ENCODE measurements at regions of chr7 and their contacts with region 1.

Region 1: GRCh38 chr7:8217200-8218068 is 44.5 kb downstream of the ICA1 start:
- DNase-seq: peak; percentile 78
- H3K4me3 ChIP-seq: no peak overlapping the region
- H3K27ac ChIP-seq: no peak overlapping the region
- H3K4me1 ChIP-seq: no peaks in the 10 kb centered on the region
- H3K27me3 ChIP-seq: no peaks in the 10 kb centered on the region
- CTCF ChIP-seq: peak; percentile 70

Region 2: DNA sequence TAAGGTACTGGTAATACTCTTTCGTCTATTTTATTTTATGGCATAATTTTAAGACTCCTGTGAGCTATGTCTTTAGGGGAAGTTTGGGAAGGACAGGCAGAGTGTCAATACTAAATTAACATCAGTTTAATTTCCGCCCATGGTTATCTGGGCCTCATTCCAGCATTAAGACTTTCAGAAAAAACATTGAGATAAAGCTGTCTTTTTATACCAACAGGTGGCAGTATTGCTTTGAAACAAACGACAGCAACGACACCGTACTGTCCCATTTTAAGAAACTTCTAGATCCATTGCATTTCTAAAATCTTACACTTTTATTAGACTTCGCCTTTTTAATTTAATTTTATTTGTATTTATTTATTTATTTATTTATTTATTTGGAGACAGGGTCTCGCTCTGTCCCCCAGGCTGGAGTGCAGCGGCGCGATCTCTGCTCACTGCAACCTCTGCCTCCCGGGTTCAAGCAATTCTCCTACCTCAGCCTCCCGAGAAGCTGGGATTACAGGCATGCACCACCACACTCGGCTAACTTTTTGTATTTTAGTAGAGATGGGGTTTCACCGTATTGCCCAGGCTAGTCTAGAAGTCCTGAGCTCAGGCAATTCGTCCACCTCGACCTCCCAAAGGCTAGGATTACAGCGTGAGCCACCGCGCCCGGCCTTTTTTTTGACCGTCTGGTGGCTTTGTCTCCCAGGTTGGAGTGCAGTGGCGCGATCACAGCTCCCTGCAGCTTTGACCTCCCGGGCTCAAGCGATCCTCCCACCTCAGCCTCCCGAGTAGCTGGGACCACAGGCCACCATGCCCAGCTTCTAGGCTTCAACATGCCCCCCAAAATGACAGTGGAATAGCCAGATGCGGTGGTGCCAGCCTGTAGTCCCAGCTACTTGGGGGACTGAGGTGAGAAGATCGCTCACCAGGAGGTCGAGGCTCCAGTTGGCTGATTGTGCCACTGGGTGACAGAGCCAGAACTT is 1113.8 kb before region 1 on chr7:
- CTCF ChIA-PET with region 1: no interaction called
- POLR2A ChIA-PET with region 1: no interaction called
- intact Hi-C with region 1: loop called (anchors 10 kb)
- DNase-seq: peak; percentile 74
- H3K4me3 ChIP-seq: no peak overlapping the region
- H3K27ac ChIP-seq: no peak overlapping the region
- H3K4me1 ChIP-seq: peaks cover 18% of the 10 kb centered on the region
- H3K27me3 ChIP-seq: no peaks in the 10 kb centered on the region
- CTCF ChIP-seq: peak; percentile 67

Region 3: GRCh38 chr7:7424151-7424873 is 793.1 kb before region 1 on chr7:
- CTCF ChIA-PET with region 1: no interaction called
- POLR2A ChIA-PET with region 1: no interaction called
- intact Hi-C with region 1: loop called (anchors 5 kb)
- DNase-seq: peak; percentile 76
- H3K4me3 ChIP-seq: peak overlapping the region; percentile 33
- H3K27ac ChIP-seq: no peak overlapping the region
- H3K4me1 ChIP-seq: no peaks in the 10 kb centered on the region
- H3K27me3 ChIP-seq: peaks cover 3% of the 10 kb centered on the region
- CTCF ChIP-seq: peak; percentile 86

Region 4: GRCh38 chr7:7595451-7595850 is 622.0 kb before region 1 on chr7:
- CTCF ChIA-PET with region 1: no interaction called
- POLR2A ChIA-PET with region 1: no interaction called
- intact Hi-C with region 1: loop called (anchors 1 kb)
- DNase-seq: peak; percentile 49
- H3K4me3 ChIP-seq: no peak overlapping the region
- H3K27ac ChIP-seq: no peak overlapping the region
- H3K4me1 ChIP-seq: no peaks in the 10 kb centered on the region
- H3K27me3 ChIP-seq: no peaks in the 10 kb centered on the region
- CTCF ChIP-seq: peak; percentile 56

Region 5: GRCh38 chr7:7662527-7662926 is 554.9 kb before region 1 on chr7:
- CTCF ChIA-PET with region 1: no interaction called
- POLR2A ChIA-PET with region 1: no interaction called
- intact Hi-C with region 1: loop called (anchors 5 kb)
- DNase-seq: peak; percentile 37
- H3K4me3 ChIP-seq: no peak overlapping the region
- H3K27ac ChIP-seq: no peak overlapping the region
- H3K4me1 ChIP-seq: peaks cover 7% of the 10 kb centered on the region
- H3K27me3 ChIP-seq: no peaks in the 10 kb centered on the region
- CTCF ChIP-seq: peak; percentile 56

Region 6: DNA sequence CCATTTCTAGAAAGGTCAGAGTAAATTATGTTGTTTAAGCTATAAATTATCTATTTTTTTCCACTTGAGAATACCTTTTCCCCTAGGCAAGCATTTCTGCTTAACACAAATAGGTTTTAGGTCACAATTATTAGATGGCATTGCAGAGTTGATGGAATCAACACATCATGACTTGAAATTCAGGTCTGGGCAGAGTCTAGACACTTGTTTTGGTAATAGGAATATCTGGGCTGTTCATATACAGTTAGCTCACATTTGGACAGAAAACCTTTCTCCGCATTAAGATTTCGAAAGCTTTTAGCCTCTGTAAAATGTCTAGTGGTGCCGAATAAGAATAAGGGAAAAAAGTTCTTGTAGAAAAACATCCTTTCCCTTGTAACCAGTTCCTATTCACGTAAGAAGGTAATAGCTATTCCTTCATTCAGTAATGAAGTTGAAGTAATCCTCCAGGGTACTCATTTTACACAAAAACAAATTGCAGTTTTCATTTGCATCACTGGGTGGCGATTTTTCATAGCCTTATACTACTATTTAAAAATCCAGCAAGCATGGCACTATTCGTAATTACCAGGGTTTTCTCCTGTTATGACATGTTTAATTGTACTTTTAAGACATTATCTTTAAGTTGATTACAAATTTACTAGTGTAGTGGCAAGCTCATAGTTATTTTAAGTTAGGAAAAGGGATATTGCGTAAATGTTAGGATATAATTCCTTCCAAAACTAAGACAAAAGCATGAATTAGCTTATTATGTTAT is 536.1 kb before region 1 on chr7:
- CTCF ChIA-PET with region 1: interaction called, 4 read pairs
- POLR2A ChIA-PET with region 1: no interaction called
- intact Hi-C with region 1: loop called (anchors 5 kb)
- DNase-seq: peak; percentile 81
- H3K4me3 ChIP-seq: no peak overlapping the region
- H3K27ac ChIP-seq: no peak overlapping the region
- H3K4me1 ChIP-seq: no peaks in the 10 kb centered on the region
- H3K27me3 ChIP-seq: no peaks in the 10 kb centered on the region
- CTCF ChIP-seq: peak; percentile 73

Region 7: GRCh38 chr7:7761340-7761980 is 456.0 kb before region 1 on chr7:
- CTCF ChIA-PET with region 1: no interaction called
- POLR2A ChIA-PET with region 1: no interaction called
- intact Hi-C with region 1: loop called (anchors 10 kb)
- DNase-seq: peak; percentile 55
- H3K4me3 ChIP-seq: no peak overlapping the region
- H3K27ac ChIP-seq: no peak overlapping the region
- H3K4me1 ChIP-seq: no peaks in the 10 kb centered on the region
- H3K27me3 ChIP-seq: no peaks in the 10 kb centered on the region
- CTCF ChIP-seq: peak; percentile 50

Region 8: DNA sequence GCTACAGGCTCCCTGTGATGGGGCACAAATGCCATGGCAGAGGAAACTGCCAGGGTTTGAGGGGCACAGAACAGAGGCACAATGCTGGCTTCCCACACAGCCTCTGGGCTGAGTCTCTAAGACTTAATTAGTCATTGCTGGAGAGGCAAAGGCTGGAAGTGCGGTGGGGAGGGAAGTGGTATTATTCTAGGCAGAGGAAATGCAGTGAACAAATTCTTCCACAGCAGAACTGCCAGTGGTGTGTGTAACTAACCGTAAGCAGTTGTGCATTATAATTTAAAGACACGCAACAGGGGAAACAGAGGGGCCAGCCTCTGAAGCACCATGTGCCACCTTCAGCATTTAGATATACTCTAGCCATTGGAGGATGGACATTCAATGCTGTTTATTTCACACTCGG is 31.7 kb after region 1 on chr7:
- CTCF ChIA-PET with region 1: no interaction called
- POLR2A ChIA-PET with region 1: no interaction called
- intact Hi-C with region 1: no loop called
- DNase-seq: no peak
- H3K4me3 ChIP-seq: no peak overlapping the region
- H3K27ac ChIP-seq: no peak overlapping the region
- H3K4me1 ChIP-seq: no peaks in the 10 kb centered on the region
- H3K27me3 ChIP-seq: peaks cover 40% of the 10 kb centered on the region
- CTCF ChIP-seq: no peak

Measured in A673 (cell line).